HCT116 (cell line): ENCODE measurements at regions of chr2 and their contacts with region 1.

Region 1: DNA sequence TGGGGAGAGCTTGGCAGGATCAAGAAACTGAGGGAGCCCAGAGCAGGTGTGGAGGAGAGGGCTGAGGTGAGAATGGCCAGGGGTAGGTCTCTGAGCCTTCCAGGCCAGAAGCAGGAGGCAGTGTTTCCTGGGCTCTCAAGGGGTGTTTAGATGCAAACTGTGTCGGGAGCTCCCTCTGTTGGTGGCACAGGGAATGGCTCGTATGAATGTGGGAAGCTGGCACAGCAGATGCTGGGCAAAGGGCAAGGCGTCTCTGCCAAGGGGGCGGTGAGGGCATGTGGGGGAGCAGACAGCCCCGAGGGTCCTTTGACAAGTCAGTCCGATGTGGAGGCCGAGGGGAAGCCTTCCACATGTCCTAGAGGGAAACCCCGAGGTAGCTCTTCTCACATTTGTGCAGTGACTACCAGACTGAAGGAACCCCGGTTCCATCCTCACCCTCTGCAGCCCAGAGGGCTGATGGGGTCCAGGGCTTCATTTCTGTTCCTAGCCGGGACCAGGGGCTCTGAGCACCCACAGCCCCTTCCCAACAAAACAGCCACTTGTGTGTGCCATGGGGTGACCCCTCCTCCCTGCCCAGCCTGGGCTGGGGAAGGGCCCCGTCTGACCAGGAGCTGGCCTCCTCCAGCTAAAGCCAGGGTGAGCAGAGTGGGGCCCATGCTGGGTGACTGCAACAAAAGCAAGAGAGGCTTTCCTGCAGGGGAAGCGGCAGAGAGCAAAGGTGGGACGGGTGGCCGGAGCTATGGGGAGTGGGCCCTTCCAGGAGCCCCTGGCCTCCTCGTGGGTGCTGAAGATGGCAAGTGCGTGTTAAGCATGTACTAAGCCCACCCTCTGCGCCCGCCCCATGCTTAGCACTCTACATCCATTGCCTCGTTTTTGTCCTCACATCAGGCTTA is 103.4 kb downstream of the SEPTIN10 start:
- DNase-seq: peak; percentile 50
- ATAC-seq: peak; percentile 93
- H3K4me3 ChIP-seq: no peak overlapping the region
- H3K27ac ChIP-seq: no peak overlapping the region
- H3K4me1 ChIP-seq: no peaks in the 10 kb centered on the region
- H3K27me3 ChIP-seq: no peaks in the 10 kb centered on the region
- CTCF ChIP-seq: peak; percentile 91 to 95 (median 94)
- POLR2A ChIP-seq: no peak
- RAD21 ChIP-seq: peak; percentile 93

Region 2: GRCh38 chr2:108898315-108899082 is 611.9 kb before region 1 on chr2:
- CTCF ChIA-PET with region 1: no interaction called
- POLR2A ChIA-PET with region 1: no interaction called
- RAD21 ChIA-PET with region 1: no interaction called
- intact Hi-C with region 1: no loop called
- DNase-seq: no peak
- ATAC-seq: no peak
- H3K4me3 ChIP-seq: no peak overlapping the region
- H3K27ac ChIP-seq: no peak overlapping the region
- H3K4me1 ChIP-seq: no peaks in the 10 kb centered on the region
- H3K27me3 ChIP-seq: no peaks in the 10 kb centered on the region
- CTCF ChIP-seq: no peak
- POLR2A ChIP-seq: no peak
- RAD21 ChIP-seq: no peak

Region 3: DNA sequence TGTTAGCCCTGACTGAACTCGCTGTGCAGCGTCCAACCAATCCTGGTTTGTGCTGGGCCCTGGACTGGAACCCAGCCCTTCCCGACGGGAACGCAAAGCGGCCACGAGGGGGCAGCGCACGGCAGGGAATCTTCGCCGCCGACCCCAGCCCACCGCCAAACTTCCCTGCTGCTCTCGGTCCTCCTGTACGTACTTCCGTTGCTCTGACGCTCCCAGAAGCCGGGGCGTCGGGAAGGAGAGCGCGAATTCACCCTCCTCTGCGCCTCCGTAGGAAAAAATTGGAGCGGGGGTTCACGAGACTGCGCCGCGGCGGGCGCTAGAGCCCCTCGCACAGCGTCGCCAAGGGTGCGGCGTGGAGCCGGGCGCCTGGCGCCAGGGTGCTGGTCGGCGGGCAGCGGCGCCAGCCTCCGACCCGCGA is 382.3 kb before region 1 on chr2:
- CTCF ChIA-PET with region 1: interaction called, 19 read pairs
- POLR2A ChIA-PET with region 1: no interaction called
- RAD21 ChIA-PET with region 1: interaction called in 1 of 2 experiments, 4 read pairs
- intact Hi-C with region 1: loop called (anchors 1 kb)
- DNase-seq: peak; percentile 26
- ATAC-seq: peak; percentile 92
- H3K4me3 ChIP-seq: no peak overlapping the region
- H3K27ac ChIP-seq: no peak overlapping the region
- H3K4me1 ChIP-seq: peaks cover 12 to 17% of the 10 kb centered on the region in 2 experiments; a peak in 3 of 4 replicates
- H3K27me3 ChIP-seq: peaks cover 13% of the 10 kb centered on the region; the same call in 1 of the 2 replicates
- CTCF ChIP-seq: peak; percentile 60 to 81 (median 78); a peak in 5 of 6 replicates
- POLR2A ChIP-seq: no peak
- RAD21 ChIP-seq: peak; percentile 87

Region 4: DNA sequence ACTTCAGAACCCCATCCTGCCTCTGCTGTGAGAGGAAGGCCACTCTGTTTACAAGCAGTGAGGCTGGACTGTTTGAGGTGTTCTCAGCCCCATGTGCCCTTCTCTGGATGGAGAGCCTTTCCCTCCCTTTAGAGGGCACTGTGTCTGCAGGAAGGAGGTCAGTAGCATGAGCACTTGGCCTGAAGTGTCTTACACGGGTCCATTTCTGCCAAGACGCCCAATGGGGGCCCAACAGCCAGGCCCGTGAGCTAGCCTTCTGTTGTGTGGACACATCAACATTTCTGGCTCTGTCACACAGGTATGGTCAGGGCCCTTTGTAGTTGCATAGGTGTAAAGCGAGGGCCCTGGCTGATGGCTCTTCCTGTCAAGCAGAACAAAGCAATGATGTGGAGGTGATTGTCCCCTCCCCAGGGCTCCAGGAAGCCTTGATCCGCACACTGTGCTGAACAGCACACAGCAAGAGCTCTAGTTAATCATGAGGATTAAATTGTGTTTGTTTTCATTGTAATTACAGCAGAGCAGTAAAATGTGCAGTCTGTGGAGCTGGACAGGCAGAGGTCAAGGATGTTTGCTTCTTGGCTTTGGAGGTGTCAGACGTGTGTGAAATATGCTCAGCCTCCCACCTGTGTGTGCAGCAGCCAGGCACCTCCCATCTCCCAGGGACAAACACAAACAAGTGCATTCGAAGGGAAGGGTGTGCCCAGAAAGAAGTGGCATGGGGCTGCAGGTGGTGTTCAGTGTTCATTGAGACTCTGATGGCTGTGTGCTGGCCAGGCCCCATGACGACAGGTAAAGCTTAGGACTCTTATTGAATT is 249.3 kb before region 1 on chr2:
- CTCF ChIA-PET with region 1: no interaction called
- POLR2A ChIA-PET with region 1: no interaction called
- RAD21 ChIA-PET with region 1: no interaction called
- intact Hi-C with region 1: loop called (anchors 1 kb)
- DNase-seq: no peak
- ATAC-seq: peak; percentile 88
- H3K4me3 ChIP-seq: no peak overlapping the region
- H3K27ac ChIP-seq: no peak overlapping the region
- H3K4me1 ChIP-seq: peaks cover 4 to 11% of the 10 kb centered on the region in 2 experiments; a peak in 3 of 4 replicates
- H3K27me3 ChIP-seq: no peaks in the 10 kb centered on the region; the same call in 1 of the 2 replicates
- CTCF ChIP-seq: peak; percentile 30 to 55 (median 44); a peak in 5 of 6 replicates
- POLR2A ChIP-seq: no peak
- RAD21 ChIP-seq: peak; percentile 58